Ovary (tissue), 10 donors: ENCODE measurements at regions of chr2 and their contacts with region 1.

Region 1: GRCh38 chr2:158729873-158730620 is 65.1 kb upstream of the DAPL1 start:
- DNase-seq: no peak
- H3K4me3 ChIP-seq: no peak overlapping the region
- H3K27ac ChIP-seq: no peak overlapping the region
- H3K4me1 ChIP-seq: no peaks in the 10 kb centered on the region
- H3K27me3 ChIP-seq: no peaks in the 10 kb centered on the region
- CTCF ChIP-seq: no peak
- EP300 ChIP-seq: no peak
- POLR2A ChIP-seq: no peak

Region 2: DNA sequence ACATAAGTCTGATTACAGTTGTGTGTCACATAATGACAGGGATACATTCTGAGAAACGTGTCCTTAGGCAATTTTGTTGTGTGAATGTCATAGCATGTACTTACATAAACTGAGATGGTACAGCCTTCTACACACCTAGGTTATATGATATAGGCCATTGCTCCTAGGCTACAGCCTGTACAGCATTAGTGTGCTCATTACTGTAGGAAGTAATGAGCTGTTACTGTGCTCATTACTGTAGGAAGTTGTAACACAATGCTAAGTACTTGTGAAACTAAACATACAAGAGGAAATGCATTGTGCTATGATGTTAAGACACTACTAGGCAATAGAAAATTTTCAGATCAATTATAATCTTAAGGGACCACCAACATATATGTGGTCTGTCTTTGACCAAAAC is 555.6 kb before region 1 on chr2:
- intact Hi-C with region 1: loop called in 1 of 4 experiments (anchors 10 kb)
- DNase-seq: no peak
- H3K4me3 ChIP-seq: no peak overlapping the region
- H3K27ac ChIP-seq: no peak overlapping the region
- H3K4me1 ChIP-seq: no peaks in the 10 kb centered on the region
- H3K27me3 ChIP-seq: no peaks in the 10 kb centered on the region
- CTCF ChIP-seq: no peak
- EP300 ChIP-seq: no peak
- POLR2A ChIP-seq: no peak